Activated CD4-positive, alpha-beta T cell treated with anti-CD3 and anti-CD28 coated beads for 36 hours (primary cell): ENCODE measurements at regions of chr9 and their contacts with region 1.

Region 1: DNA sequence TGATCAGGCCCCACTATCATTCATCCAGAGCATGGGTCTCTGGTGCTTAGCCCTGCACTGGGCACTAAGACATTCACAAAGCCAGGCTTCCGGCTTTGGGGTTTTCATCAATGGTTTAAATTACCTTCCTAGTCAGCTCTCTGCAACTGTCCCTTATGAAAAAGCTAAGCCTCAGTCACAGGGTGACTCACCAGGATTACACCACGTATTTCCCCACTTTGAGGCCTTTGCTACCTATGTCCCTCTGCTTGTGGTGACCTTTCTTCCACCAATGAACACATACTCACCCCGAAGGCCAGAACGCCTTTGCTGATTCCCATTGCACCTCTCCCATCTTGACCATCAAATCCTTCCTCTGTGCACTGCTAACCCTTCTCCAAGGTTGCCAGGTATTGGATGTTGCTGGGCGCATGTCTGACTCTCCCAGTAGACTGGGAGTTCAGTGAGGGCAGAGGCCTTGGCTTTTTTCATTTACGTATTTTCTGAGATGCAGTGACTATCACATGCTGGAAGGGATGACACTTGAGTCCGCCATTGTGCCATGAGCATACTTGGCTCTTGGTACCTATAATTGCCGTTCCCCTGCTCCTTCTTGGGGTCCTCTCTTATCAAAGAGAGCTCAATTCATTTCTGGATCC is 58.7 kb upstream of the TNFSF8 start:
- DNase-seq: peak; percentile 64
- ATAC-seq: peak; percentile 63
- H3K4me3 Mint-ChIP-seq: peak overlapping the region; percentile 19
- H3K27ac Mint-ChIP-seq: peak overlapping the region; percentile 95
- H3K4me1 Mint-ChIP-seq: peaks cover 68% of the 10 kb centered on the region
- H3K27me3 Mint-ChIP-seq: no peaks in the 10 kb centered on the region

Region 2: DNA sequence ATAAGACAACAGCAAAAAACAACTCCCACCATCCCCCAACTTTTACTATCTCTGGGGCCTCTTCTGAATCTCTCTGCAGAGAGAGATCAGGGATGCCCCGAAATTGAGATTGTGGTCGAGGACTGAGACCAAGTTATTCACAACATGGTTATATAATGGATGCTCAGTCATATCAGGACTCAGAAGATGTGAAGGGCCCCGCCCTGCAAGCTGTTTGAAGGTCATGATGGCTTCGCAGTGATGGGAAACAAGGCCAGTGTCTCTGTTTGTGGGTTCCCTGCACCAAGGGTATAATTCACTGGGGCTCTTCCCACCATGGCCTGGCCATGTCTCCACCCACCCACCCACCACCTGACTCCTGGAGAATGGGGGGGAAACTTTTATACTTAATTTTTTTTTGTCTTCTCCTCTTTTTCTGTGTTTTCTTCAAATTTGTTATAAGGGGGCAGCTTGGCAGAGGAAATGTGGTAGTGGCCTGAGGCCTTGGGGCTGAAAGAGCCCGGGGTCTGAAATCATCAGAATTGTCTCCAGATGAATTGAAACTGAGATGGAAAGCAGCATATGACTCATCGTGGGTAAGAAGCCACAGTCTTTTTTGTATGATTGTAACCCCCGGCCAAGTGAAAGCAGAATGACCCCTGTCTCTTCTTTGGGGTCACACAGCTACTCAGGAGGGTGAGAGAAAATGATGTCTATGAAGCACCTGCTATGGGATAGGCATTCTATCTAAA is 292.1 kb before region 1 on chr9:
- CTCF ChIA-PET with region 1: interaction called, 6 read pairs
- POLR2A ChIA-PET with region 1: interaction called, 51 read pairs
- intact Hi-C with region 1: loop called (anchors 1 kb)
- DNase-seq: peak; percentile 86
- ATAC-seq: peak; percentile 49
- H3K4me3 Mint-ChIP-seq: peak overlapping the region; percentile 28
- H3K27ac Mint-ChIP-seq: peak overlapping the region; percentile 89
- H3K4me1 Mint-ChIP-seq: peaks cover 89% of the 10 kb centered on the region
- H3K27me3 Mint-ChIP-seq: no peaks in the 10 kb centered on the region

Region 3: GRCh38 chr9:114746601-114747346 is 242.3 kb before region 1 on chr9:
- CTCF ChIA-PET with region 1: no interaction called
- POLR2A ChIA-PET with region 1: no interaction called
- intact Hi-C with region 1: no loop called
- DNase-seq: no peak
- ATAC-seq: no peak
- H3K4me3 Mint-ChIP-seq: no peak overlapping the region
- H3K27ac Mint-ChIP-seq: peak overlapping the region; percentile 39
- H3K4me1 Mint-ChIP-seq: peaks cover 21% of the 10 kb centered on the region
- H3K27me3 Mint-ChIP-seq: no peaks in the 10 kb centered on the region

Region 4: DNA sequence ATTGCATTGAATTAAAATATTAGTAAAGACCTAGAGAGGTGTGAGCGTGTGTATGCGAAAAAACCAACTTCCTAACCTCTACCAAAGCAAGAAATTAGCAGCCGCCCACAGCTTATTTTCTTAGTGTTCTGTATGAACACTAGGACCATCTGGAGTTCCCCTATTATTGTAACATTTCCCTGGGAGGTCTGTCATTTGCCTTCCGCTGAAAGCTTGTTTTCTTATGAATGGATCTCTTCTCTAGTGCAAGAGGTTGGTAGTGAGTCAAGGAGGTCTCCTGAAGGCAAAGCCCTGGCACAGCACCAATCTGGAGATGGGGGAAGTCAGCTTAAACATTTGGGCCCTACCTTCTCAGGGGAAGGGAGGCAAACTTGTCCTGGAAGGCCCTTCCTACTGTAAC is 69.5 kb before region 1 on chr9:
- CTCF ChIA-PET with region 1: interaction called, 16 read pairs
- POLR2A ChIA-PET with region 1: interaction called, 9 read pairs
- intact Hi-C with region 1: no loop called
- DNase-seq: peak; percentile 55
- ATAC-seq: peak; percentile 86
- H3K4me3 Mint-ChIP-seq: peak overlapping the region; percentile 3
- H3K27ac Mint-ChIP-seq: peak overlapping the region; percentile 69
- H3K4me1 Mint-ChIP-seq: peaks cover 90% of the 10 kb centered on the region
- H3K27me3 Mint-ChIP-seq: no peaks in the 10 kb centered on the region

Region 5: DNA sequence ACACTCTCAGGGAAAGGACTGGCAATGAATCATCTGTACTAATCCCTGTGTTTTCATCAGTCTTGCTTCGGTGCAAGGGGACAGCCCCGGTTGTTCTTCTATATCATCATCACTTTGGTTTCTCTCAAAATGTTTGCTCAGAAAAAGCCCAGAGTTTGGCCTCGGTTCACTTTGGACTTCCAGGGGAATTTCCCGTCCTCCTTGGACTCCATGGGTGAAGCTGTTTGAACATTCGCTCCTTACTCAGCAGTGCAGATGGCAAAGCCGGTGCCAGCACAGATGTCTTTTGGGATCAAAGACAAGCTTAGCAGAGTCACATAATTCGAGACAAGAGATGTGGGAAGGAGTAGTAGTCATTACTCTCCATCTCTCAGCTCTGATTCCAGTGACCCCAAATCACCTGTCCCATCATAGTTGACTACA is 11.1 kb after region 1 on chr9:
- CTCF ChIA-PET with region 1: interaction called, 18 read pairs
- POLR2A ChIA-PET with region 1: interaction called, 30 read pairs
- intact Hi-C with region 1: loop called in 1 of 2 experiments (anchors 1 kb)
- DNase-seq: peak; percentile 58
- ATAC-seq: peak; percentile 69
- H3K4me3 Mint-ChIP-seq: peak overlapping the region; percentile 79
- H3K27ac Mint-ChIP-seq: peak overlapping the region; percentile 92
- H3K4me1 Mint-ChIP-seq: peaks cover 68% of the 10 kb centered on the region
- H3K27me3 Mint-ChIP-seq: no peaks in the 10 kb centered on the region

Region 6: DNA sequence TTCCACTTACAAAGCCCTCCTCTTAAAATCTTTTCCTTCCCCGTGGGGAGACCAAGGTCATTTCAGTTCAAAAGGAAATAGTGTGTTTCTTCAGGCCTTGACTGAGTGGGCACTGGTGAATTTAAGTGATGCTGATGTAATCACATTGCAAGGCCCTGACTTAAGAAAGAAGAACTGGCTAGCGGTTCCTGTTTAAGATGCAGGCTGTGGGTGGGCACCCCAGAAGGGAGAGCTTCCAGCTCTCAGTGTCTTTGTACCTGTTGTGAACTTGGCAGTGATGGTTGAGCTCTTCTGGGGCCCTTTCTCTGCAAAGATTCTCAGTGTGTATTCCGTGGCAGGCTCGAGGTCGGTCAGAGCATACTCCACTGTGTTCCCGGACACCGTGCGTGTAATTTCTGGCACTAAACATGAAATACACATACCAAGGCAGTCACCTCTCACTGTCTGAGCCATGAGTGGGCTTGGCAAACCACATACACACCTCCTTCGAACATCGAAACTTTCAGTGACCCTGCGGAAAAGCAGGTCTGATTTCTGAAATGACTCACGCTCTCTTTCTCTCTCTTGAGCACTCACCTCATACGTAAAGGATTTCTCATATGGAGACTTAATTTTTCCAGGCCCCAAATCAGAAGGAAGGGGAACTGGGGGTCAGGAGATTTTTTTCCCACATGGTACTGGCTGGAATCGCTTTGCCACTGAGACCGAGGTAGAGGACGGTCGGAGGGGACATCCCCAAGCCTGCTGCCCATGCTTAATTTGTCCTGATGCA is 46.9 kb after region 1 on chr9:
- CTCF ChIA-PET with region 1: no interaction called
- POLR2A ChIA-PET with region 1: interaction called, 7 read pairs
- intact Hi-C with region 1: loop called in 1 of 2 experiments (anchors 1 kb)
- DNase-seq: peak; percentile 71
- ATAC-seq: peak; percentile 87
- H3K4me3 Mint-ChIP-seq: peak overlapping the region; percentile 1
- H3K27ac Mint-ChIP-seq: peak overlapping the region; percentile 84
- H3K4me1 Mint-ChIP-seq: peaks cover 24% of the 10 kb centered on the region
- H3K27me3 Mint-ChIP-seq: peaks cover 7% of the 10 kb centered on the region

Region 7: GRCh38 chr9:115444959-115445358 is 455.9 kb after region 1 on chr9:
- CTCF ChIA-PET with region 1: no interaction called
- POLR2A ChIA-PET with region 1: no interaction called
- intact Hi-C with region 1: no loop called
- DNase-seq: no peak
- ATAC-seq: no peak
- H3K4me3 Mint-ChIP-seq: no peak overlapping the region
- H3K27ac Mint-ChIP-seq: no peak overlapping the region
- H3K4me1 Mint-ChIP-seq: no peaks in the 10 kb centered on the region
- H3K27me3 Mint-ChIP-seq: peaks cover 13% of the 10 kb centered on the region

Region 8: GRCh38 chr9:115877920-115878319 is 888.8 kb after region 1 on chr9:
- CTCF ChIA-PET with region 1: no interaction called
- POLR2A ChIA-PET with region 1: no interaction called
- intact Hi-C with region 1: no loop called
- DNase-seq: no peak
- ATAC-seq: no peak
- H3K4me3 Mint-ChIP-seq: no peak overlapping the region
- H3K27ac Mint-ChIP-seq: no peak overlapping the region
- H3K4me1 Mint-ChIP-seq: no peaks in the 10 kb centered on the region
- H3K27me3 Mint-ChIP-seq: no peaks in the 10 kb centered on the region

Region 9: GRCh38 chr9:116549061-116549664 is 1560.1 kb after region 1 on chr9:
- CTCF ChIA-PET with region 1: no interaction called
- POLR2A ChIA-PET with region 1: no interaction called
- intact Hi-C with region 1: no loop called
- DNase-seq: peak; percentile 9
- ATAC-seq: no peak
- H3K4me3 Mint-ChIP-seq: no peak overlapping the region
- H3K27ac Mint-ChIP-seq: no peak overlapping the region
- H3K4me1 Mint-ChIP-seq: peaks cover 5% of the 10 kb centered on the region
- H3K27me3 Mint-ChIP-seq: no peaks in the 10 kb centered on the region